ENCODE measurements at regions of chr11 and their contacts with region 1.

Region 1: DNA sequence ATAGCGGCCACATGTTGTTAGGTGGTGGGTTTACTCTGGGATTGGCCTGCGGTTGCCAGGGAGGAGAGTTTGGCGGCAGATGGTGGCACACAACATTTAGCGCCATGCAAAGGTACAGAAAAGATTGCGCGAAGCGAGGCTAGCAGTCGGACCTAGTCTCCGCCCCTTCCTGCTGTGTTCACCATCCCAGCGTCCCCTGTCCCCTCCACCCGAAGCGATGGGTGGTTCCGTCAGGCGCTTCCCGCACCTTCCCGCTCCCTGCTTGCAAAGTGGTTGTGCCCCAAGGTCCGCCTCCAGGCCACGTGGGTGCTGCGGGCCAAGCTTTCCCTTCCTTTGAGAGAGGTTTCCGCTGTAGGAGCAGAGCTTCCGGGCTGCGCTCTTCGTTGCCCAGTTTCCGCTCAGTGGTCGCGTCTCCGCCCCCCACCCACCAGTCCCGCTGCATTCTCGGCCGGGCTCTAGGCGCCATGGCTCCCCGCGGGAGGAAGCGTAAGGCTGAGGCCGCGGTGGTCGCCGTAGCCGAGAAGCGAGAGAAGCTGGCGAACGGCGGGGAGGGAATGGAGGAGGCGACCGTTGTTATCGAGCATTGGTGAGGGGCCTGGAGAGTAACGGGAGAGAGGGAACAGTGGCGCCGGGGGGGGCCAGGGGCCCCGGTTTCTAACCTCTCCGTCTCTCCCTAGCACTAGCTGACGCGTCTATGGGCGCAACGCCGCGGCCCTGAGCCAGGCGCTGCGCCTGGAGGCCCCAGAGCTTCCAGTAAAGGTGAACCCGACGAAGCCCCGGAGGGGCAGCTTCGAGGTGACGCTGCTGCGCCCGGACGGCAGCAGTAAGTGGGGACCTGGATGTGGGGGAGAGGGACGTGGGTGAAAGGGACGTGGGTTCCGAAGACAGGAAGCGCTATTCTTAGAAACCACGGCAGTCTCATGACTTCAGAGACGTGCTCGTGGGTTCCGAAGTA is at the start of gene SELENOH:
- DNase-seq: peak; percentile 97
- ATAC-seq: peak; percentile 91
- H3K4me3 Mint-ChIP-seq: peak within 1 kb of the TSS; percentile 86
- H3K27ac Mint-ChIP-seq: peak within 1 kb of the TSS; percentile 93
- H3K4me1 Mint-ChIP-seq: peaks cover 25% of the 10 kb centered on the region
- H3K27me3 Mint-ChIP-seq: no peaks in the 10 kb centered on the region
- total RNA-seq, gene SELENOH: 114 to 145 TPM

Region 2: GRCh38 chr11:57751676-57752253 is 10.4 kb after region 1 on chr11 and contains the start of gene BTBD18:
- CTCF ChIA-PET with region 1: interaction called, 15 read pairs
- DNase-seq: no peak
- ATAC-seq: no peak
- H3K4me3 Mint-ChIP-seq: no peak within 1 kb of the TSS
- H3K27ac Mint-ChIP-seq: no peak within 1 kb of the TSS
- H3K4me1 Mint-ChIP-seq: peaks cover 9% of the 10 kb centered on the region
- H3K27me3 Mint-ChIP-seq: no peaks in the 10 kb centered on the region
- total RNA-seq, gene BTBD18: not detected

Measured in activated CD8-positive, alpha-beta memory T cell treated with anti-CD3 and anti-CD28 coated beads, Interleukin-2, amount 10 ng/mL, durations not matched to agents 7 days and 5 days (primary cell).